Heart left ventricle (tissue), 16 donors: ENCODE measurements at regions of chr12 and their contacts with region 1.

Region 1: GRCh38 chr12:70365648-70366518 is at the start of gene KCNMB4:
- DNase-seq: peak; percentile 66 to 79 (median 70)
- ATAC-seq: peak; percentile 57 to 96 (median 86)
- H3K4me3 ChIP-seq: peak within 1 kb of the TSS; percentile 39 to 87 (median 74)
- H3K27ac ChIP-seq: peak within 1 kb of the TSS in 9 of 12 donors; percentile 8 to 58 (median 48)
- H3K4me1 ChIP-seq: peaks cover 0 to 30% (median 10%) of the 10 kb centered on the region in 12 donors
- H3K27me3 ChIP-seq: peaks cover 0 to 21% (median 0%) of the 10 kb centered on the region in 9 donors
- CTCF ChIP-seq: no peak
- POLR2A ChIP-seq: no peak
- total RNA-seq, gene KCNMB4: 0.96 to 3.6 (median 2.1) TPM

Region 2: GRCh38 chr12:70338526-70338925 is 27.4 kb before region 1 on chr12:
- intact Hi-C with region 1: no loop called
- DNase-seq: no peak
- ATAC-seq: no peak
- H3K4me3 ChIP-seq: no peak overlapping the region
- H3K27ac ChIP-seq: no peak overlapping the region
- H3K4me1 ChIP-seq: peaks cover 0 to under 1% (median 0%) of the 10 kb centered on the region in 12 donors
- H3K27me3 ChIP-seq: no peaks in the 10 kb centered on the region
- CTCF ChIP-seq: no peak
- POLR2A ChIP-seq: no peak

Region 3: GRCh38 chr12:70560671-70561070 is 194.8 kb after region 1 on chr12:
- intact Hi-C with region 1: loop called in 1 of 10 experiments (anchors 10 kb)
- DNase-seq: no peak
- ATAC-seq: no peak
- H3K4me3 ChIP-seq: no peak overlapping the region
- H3K27ac ChIP-seq: no peak overlapping the region
- H3K4me1 ChIP-seq: peaks cover 0 to 3% (median 0%) of the 10 kb centered on the region in 12 donors
- H3K27me3 ChIP-seq: no peaks in the 10 kb centered on the region
- CTCF ChIP-seq: no peak
- POLR2A ChIP-seq: no peak

Region 4: GRCh38 chr12:70576346-70577282 is 210.7 kb after region 1 on chr12:
- intact Hi-C with region 1: loop called in 4 of 10 experiments (anchors 10 kb)
- DNase-seq: peak in 1 of 5 donors; percentile 9
- ATAC-seq: peak in 3 of 4 donors; percentile 73 to 86 (median 82)
- H3K4me3 ChIP-seq: no peak overlapping the region
- H3K27ac ChIP-seq: peak overlapping the region in 2 of 12 donors; percentile 5 to 8
- H3K4me1 ChIP-seq: peaks cover 0 to 9% (median 0%) of the 10 kb centered on the region in 12 donors
- H3K27me3 ChIP-seq: no peaks in the 10 kb centered on the region
- CTCF ChIP-seq: peak; percentile 61 to 85 (median 82)
- POLR2A ChIP-seq: no peak